H1 (cell line): ENCODE measurements at regions of chr12 and their contacts with region 1.

Region 1: GRCh38 chr12:92987362-92987761 is 58.3 kb upstream of the EEA1 start:
- DNase-seq: no peak
- H3K4me3 ChIP-seq: no peak overlapping the region
- H3K27ac ChIP-seq: no peak overlapping the region
- H3K4me1 ChIP-seq: peaks cover 0 to 4% (median under 1%) of the 10 kb centered on the region in 4 experiments; a peak in 3 of 7 replicates
- H3K27me3 ChIP-seq: no peaks in the 10 kb centered on the region
- CTCF ChIP-seq: peak in 2 of 3 experiments; percentile 46 to 49; a peak in 2 of 4 replicates
- EP300 ChIP-seq: no peak
- POLR2A ChIP-seq: no peak
- RAD21 ChIP-seq: peak; percentile 73 to 81

Region 2: GRCh38 chr12:92703786-92704185 is 283.6 kb before region 1 on chr12:
- CTCF ChIA-PET with region 1: no interaction called
- POLR2A ChIA-PET with region 1: no interaction called
- DNase-seq: no peak
- H3K4me3 ChIP-seq: no peak overlapping the region
- H3K27ac ChIP-seq: no peak overlapping the region
- H3K4me1 ChIP-seq: peaks cover 0 to 4% (median 1%) of the 10 kb centered on the region in 4 experiments; a peak in 3 of 7 replicates
- H3K27me3 ChIP-seq: no peaks in the 10 kb centered on the region
- CTCF ChIP-seq: no peak
- EP300 ChIP-seq: no peak
- POLR2A ChIP-seq: no peak
- RAD21 ChIP-seq: no peak

Region 3: GRCh38 chr12:92977326-92977725 is 10.0 kb before region 1 on chr12:
- CTCF ChIA-PET with region 1: interaction called, 17 read pairs
- POLR2A ChIA-PET with region 1: no interaction called
- DNase-seq: no peak
- H3K4me3 ChIP-seq: no peak overlapping the region
- H3K27ac ChIP-seq: no peak overlapping the region
- H3K4me1 ChIP-seq: no peaks in the 10 kb centered on the region
- H3K27me3 ChIP-seq: no peaks in the 10 kb centered on the region
- CTCF ChIP-seq: no peak
- EP300 ChIP-seq: no peak
- POLR2A ChIP-seq: no peak
- RAD21 ChIP-seq: no peak

Region 4: DNA sequence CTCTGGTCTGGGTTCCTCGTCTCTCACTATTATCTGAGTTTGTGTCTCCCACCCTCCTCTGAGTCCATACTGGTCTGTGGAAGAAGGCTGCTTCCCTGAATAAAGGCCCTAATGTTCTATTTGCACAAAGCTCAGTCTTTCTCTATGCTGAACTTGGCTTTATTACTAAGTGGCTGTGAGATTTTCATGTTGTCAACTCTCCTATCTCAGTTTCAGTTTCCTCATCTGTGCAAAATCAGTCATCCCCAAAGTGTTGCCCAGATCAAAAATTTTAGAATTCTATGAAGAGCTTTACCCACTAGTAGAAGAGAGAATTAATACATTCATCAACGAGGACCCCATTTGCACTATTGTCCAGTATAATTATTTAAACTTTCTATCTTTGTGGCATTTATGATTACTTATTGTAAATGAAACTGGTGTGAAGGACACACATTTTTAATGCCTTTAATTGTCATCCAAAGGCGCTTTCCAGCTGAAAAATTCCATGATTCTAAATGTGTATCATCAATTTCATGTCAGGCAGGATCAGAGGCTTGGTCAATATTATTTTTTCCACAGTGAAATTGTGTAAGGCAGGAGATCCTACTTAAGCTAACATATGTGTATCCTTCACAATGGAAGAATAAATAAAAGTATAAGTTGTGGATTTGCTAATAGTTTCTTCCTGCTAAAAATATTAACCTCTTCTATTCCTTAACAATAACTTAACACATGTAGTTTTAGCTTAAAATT is 20.8 kb after region 1 on chr12:
- CTCF ChIA-PET with region 1: interaction called, 15 read pairs
- POLR2A ChIA-PET with region 1: no interaction called
- DNase-seq: no peak
- H3K4me3 ChIP-seq: no peak overlapping the region
- H3K27ac ChIP-seq: no peak overlapping the region
- H3K4me1 ChIP-seq: peaks cover 0 to 2% (median 0%) of the 10 kb centered on the region in 4 experiments; a peak in 1 of 7 replicates
- H3K27me3 ChIP-seq: no peaks in the 10 kb centered on the region
- CTCF ChIP-seq: no peak
- EP300 ChIP-seq: no peak
- POLR2A ChIP-seq: no peak
- RAD21 ChIP-seq: no peak

Region 5: GRCh38 chr12:93042283-93042682 is 54.9 kb after region 1 on chr12:
- CTCF ChIA-PET with region 1: no interaction called
- POLR2A ChIA-PET with region 1: no interaction called
- DNase-seq: no peak
- H3K4me3 ChIP-seq: no peak overlapping the region
- H3K27ac ChIP-seq: no peak overlapping the region
- H3K4me1 ChIP-seq: no peaks in the 10 kb centered on the region
- H3K27me3 ChIP-seq: no peaks in the 10 kb centered on the region
- CTCF ChIP-seq: no peak
- EP300 ChIP-seq: no peak
- POLR2A ChIP-seq: no peak
- RAD21 ChIP-seq: no peak

Region 6: DNA sequence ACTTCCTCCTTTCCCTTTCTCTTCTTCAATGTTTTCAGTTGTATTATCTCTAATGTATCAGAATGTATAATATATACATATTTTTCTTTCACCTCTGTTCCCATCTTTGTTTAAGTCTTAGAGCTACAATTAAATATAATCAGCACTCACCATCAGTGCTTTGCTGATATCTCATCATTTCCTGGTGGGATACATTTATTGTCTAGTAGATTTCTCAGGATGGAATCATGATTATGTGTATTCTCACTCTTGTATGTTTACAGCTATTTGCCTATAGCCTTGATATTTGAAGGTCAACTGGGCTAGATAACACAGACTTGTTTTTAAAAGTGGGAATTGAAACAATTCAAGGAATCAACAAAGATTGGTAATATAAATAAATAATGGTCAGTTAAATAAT is 66.7 kb after region 1 on chr12:
- CTCF ChIA-PET with region 1: no interaction called
- POLR2A ChIA-PET with region 1: no interaction called
- DNase-seq: no peak
- H3K4me3 ChIP-seq: no peak overlapping the region
- H3K27ac ChIP-seq: no peak overlapping the region
- H3K4me1 ChIP-seq: peaks cover 0 to 6% (median 4%) of the 10 kb centered on the region in 4 experiments; a peak in 3 of 7 replicates
- H3K27me3 ChIP-seq: no peaks in the 10 kb centered on the region
- CTCF ChIP-seq: no peak
- EP300 ChIP-seq: no peak
- POLR2A ChIP-seq: no peak
- RAD21 ChIP-seq: no peak

Region 7: GRCh38 chr12:93098077-93098476 is 110.7 kb after region 1 on chr12:
- CTCF ChIA-PET with region 1: interaction called, 19 read pairs
- POLR2A ChIA-PET with region 1: no interaction called
- DNase-seq: peak in 1 of 2 experiments; percentile 67
- H3K4me3 ChIP-seq: no peak overlapping the region
- H3K27ac ChIP-seq: no peak overlapping the region
- H3K4me1 ChIP-seq: no peaks in the 10 kb centered on the region
- H3K27me3 ChIP-seq: no peaks in the 10 kb centered on the region
- CTCF ChIP-seq: peak in 2 of 3 experiments; percentile 50 to 60; a peak in 2 of 4 replicates
- EP300 ChIP-seq: no peak
- POLR2A ChIP-seq: no peak
- RAD21 ChIP-seq: peak; percentile 69 to 72

Region 8: DNA sequence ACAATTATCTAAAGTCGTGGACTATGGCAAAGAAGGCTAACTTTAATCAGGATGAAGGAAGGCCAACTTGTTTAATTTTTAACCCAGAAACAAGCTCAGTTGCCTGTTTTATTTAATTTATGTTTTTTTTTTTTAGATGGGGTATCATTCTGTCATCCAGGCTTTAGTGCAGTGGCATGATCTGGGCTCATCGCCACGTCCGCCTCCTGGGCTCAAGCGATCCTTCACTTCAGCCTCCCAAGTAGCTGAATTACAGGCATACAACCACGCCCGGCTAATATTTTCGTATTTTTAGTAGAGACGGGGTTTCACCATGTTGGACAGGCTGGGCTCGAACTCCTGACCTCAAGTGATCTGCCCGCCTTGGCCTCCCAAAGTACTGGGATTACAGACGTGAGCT is 410.1 kb after region 1 on chr12:
- CTCF ChIA-PET with region 1: interaction called, 25 read pairs
- POLR2A ChIA-PET with region 1: no interaction called
- DNase-seq: no peak
- H3K4me3 ChIP-seq: no peak overlapping the region
- H3K27ac ChIP-seq: no peak overlapping the region
- H3K4me1 ChIP-seq: no peaks in the 10 kb centered on the region
- H3K27me3 ChIP-seq: no peaks in the 10 kb centered on the region
- CTCF ChIP-seq: no peak
- EP300 ChIP-seq: no peak
- POLR2A ChIP-seq: no peak
- RAD21 ChIP-seq: no peak